ENCODE measurements at regions of chrX and their contacts with region 1.

Region 1: DNA sequence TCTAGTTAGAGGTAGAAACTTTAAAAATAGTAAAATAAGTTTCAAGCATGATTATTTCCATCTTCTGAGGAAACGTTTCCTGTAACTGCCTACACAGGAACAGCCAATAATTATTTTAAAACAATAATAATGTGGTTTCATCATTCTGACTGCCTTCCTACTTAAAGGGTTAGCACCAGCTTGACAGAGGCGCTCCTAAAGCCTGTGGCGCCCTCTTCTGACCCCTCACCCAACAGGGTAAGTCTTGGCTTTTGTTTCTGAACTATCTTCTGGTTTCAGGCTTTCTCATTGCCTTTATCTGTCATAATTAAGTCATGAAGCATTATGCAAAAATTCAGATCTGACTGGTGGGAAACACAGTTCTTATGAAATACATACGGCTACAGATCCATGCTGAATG is 96.7 kb downstream of the ITM2A start:
- DNase-seq: peak; percentile 87
- H3K4me3 Mint-ChIP-seq: peak overlapping the region; percentile 26
- H3K27ac Mint-ChIP-seq: peak overlapping the region; percentile 85
- H3K4me1 Mint-ChIP-seq: peaks cover 45% of the 10 kb centered on the region
- H3K27me3 Mint-ChIP-seq: no peaks in the 10 kb centered on the region

Region 2: GRCh38 chrX:78321809-78322208 is 948.6 kb before region 1 on chrX:
- CTCF ChIA-PET with region 1: no interaction called
- POLR2A ChIA-PET with region 1: no interaction called
- intact Hi-C with region 1: loop called (anchors 10 kb)
- DNase-seq: peak; percentile 64
- H3K4me3 Mint-ChIP-seq: peak overlapping the region; percentile 45
- H3K27ac Mint-ChIP-seq: peak overlapping the region; percentile 81
- H3K4me1 Mint-ChIP-seq: peaks cover 32% of the 10 kb centered on the region
- H3K27me3 Mint-ChIP-seq: no peaks in the 10 kb centered on the region

Region 3: GRCh38 chrX:79081895-79082512 is 188.4 kb before region 1 on chrX:
- CTCF ChIA-PET with region 1: interaction called, 4 read pairs
- POLR2A ChIA-PET with region 1: no interaction called
- intact Hi-C with region 1: loop called (anchors 2 kb)
- DNase-seq: peak; percentile 30
- H3K4me3 Mint-ChIP-seq: peak overlapping the region; percentile 69
- H3K27ac Mint-ChIP-seq: peak overlapping the region; percentile 79
- H3K4me1 Mint-ChIP-seq: peaks cover 41% of the 10 kb centered on the region
- H3K27me3 Mint-ChIP-seq: no peaks in the 10 kb centered on the region

Region 4: GRCh38 chrX:79336869-79337815 is 66.7 kb after region 1 on chrX:
- CTCF ChIA-PET with region 1: no interaction called
- POLR2A ChIA-PET with region 1: no interaction called
- intact Hi-C with region 1: loop called (anchors 2 kb)
- DNase-seq: peak; percentile 8
- H3K4me3 Mint-ChIP-seq: peak overlapping the region; percentile 56
- H3K27ac Mint-ChIP-seq: peak overlapping the region; percentile 74
- H3K4me1 Mint-ChIP-seq: peaks cover 30% of the 10 kb centered on the region
- H3K27me3 Mint-ChIP-seq: no peaks in the 10 kb centered on the region

Region 5: GRCh38 chrX:79412972-79413371 is 142.6 kb after region 1 on chrX:
- CTCF ChIA-PET with region 1: interaction called, 10 read pairs
- POLR2A ChIA-PET with region 1: no interaction called
- intact Hi-C with region 1: loop called (anchors 1 kb)
- DNase-seq: no peak
- H3K4me3 Mint-ChIP-seq: peak overlapping the region; percentile 73
- H3K27ac Mint-ChIP-seq: peak overlapping the region; percentile 42
- H3K4me1 Mint-ChIP-seq: peaks cover 28% of the 10 kb centered on the region
- H3K27me3 Mint-ChIP-seq: no peaks in the 10 kb centered on the region

Region 6: DNA sequence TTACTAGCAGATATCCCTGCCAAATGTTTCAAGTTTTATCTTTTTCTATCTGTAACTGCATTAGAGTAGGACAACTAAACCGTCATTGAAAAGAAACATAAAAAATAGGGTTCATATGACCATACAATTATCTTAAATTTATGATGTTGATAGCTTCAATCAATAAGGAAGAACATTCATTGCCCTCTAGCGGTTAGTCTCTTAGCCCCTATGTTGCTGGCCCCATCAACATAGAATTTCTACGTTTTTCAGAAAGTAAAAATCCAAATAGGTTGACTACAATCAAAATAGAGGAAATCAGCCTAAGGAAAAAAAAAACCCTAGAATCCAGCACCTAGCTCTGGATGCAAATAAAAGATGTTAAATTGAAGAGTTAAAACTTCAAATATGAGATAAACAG is 321.9 kb after region 1 on chrX:
- CTCF ChIA-PET with region 1: no interaction called
- POLR2A ChIA-PET with region 1: no interaction called
- intact Hi-C with region 1: no loop called
- DNase-seq: no peak
- H3K4me3 Mint-ChIP-seq: no peak overlapping the region
- H3K27ac Mint-ChIP-seq: no peak overlapping the region
- H3K4me1 Mint-ChIP-seq: no peaks in the 10 kb centered on the region
- H3K27me3 Mint-ChIP-seq: peaks cover 1% of the 10 kb centered on the region

Measured in activated CD4-positive, alpha-beta memory T cell treated with anti-CD3 and anti-CD28 coated beads for 36 hours (primary cell).